Activated CD8-positive, alpha-beta memory T cell treated with anti-CD3 and anti-CD28 coated beads, Interleukin-2, amount 10 ng/mL, durations not matched to agents 7 days and 5 days (primary cell): ENCODE measurements at regions of chr16 and their contacts with region 1.

Region 1: GRCh38 chr16:30571695-30572600 is at the start of gene ZNF688:
- DNase-seq: peak; percentile 98
- ATAC-seq: peak; percentile 86
- H3K4me3 Mint-ChIP-seq: peak within 1 kb of the TSS; percentile 99
- H3K27ac Mint-ChIP-seq: peak within 1 kb of the TSS; percentile 94
- H3K4me1 Mint-ChIP-seq: peaks cover 52% of the 10 kb centered on the region
- H3K27me3 Mint-ChIP-seq: no peaks in the 10 kb centered on the region
- total RNA-seq, gene ZNF688: 14.5 to 14.7 TPM

Region 2: GRCh38 chr16:30557957-30558788 is 13.8 kb before region 1 on chr16 and contains the start of gene ZNF764:
- CTCF ChIA-PET with region 1: interaction called, 26 read pairs
- DNase-seq: peak; percentile 99
- ATAC-seq: peak; percentile 96
- H3K4me3 Mint-ChIP-seq: peak within 1 kb of the TSS; percentile 83
- H3K27ac Mint-ChIP-seq: peak within 1 kb of the TSS; percentile 87
- H3K4me1 Mint-ChIP-seq: peaks cover 41% of the 10 kb centered on the region
- H3K27me3 Mint-ChIP-seq: no peaks in the 10 kb centered on the region
- total RNA-seq, gene ZNF764: 14.0 to 15.6 TPM

Region 3: GRCh38 chr16:30585400-30586189 is 13.6 kb after region 1 on chr16 and contains the start of gene ZNF785:
- CTCF ChIA-PET with region 1: interaction called, 14 read pairs
- DNase-seq: peak; percentile 97
- ATAC-seq: peak; percentile 98
- H3K4me3 Mint-ChIP-seq: peak within 1 kb of the TSS; percentile 83
- H3K27ac Mint-ChIP-seq: peak within 1 kb of the TSS; percentile 92
- H3K4me1 Mint-ChIP-seq: peaks cover 44% of the 10 kb centered on the region
- H3K27me3 Mint-ChIP-seq: no peaks in the 10 kb centered on the region
- total RNA-seq, gene ZNF785: 18.9 to 21.2 TPM

Region 4: DNA sequence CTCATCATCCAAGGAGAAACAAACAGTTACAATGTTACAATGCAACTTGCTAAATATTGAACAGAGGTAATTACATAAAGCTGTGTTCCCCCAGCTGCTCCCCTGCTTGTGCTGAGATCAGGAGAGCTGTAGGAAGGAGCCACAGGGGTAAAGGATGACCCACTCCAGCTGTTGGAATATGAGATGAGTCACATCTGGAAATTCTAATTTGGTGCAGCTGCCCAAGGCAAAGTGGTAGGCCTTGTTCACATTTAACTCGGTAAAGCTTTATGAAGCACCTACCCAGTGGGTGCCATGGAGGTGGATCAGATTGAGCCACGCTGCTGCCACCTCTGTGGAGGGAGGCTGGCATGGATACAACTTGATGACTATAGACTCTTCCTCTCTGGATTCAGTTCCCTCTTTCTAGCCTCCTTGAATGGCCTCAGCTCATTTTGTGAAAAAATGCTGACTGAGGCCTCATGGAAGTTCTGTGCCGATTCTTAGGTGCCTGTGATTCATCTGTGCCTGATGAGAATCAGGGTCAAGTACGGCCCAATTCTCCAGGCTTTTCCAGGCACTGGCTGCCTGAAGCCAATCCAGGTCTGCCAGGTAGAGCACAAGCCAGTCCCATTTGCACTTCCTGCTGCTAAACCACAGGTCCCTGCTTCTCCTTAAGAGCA is 30.8 kb after region 1 on chr16:
- CTCF ChIA-PET with region 1: interaction called, 17 read pairs
- DNase-seq: no peak
- ATAC-seq: no peak
- H3K4me3 Mint-ChIP-seq: no peak overlapping the region
- H3K27ac Mint-ChIP-seq: no peak overlapping the region
- H3K4me1 Mint-ChIP-seq: peaks cover 12% of the 10 kb centered on the region
- H3K27me3 Mint-ChIP-seq: no peaks in the 10 kb centered on the region